BJ (cell line): ENCODE measurements at regions of chr2 and their contacts with region 1.

Region 1: GRCh38 chr2:238968616-238969384 is 120.9 kb downstream of the TWIST2 start:
- DNase-seq: no peak
- H3K4me3 ChIP-seq: no peak overlapping the region
- H3K27me3 ChIP-seq: no peaks in the 10 kb centered on the region
- CTCF ChIP-seq: no peak

Region 2: GRCh38 chr2:238954841-238955591 is 13.8 kb before region 1 on chr2:
- CTCF ChIA-PET with region 1: interaction called, 16 read pairs
- POLR2A ChIA-PET with region 1: no interaction called
- DNase-seq: no peak
- H3K4me3 ChIP-seq: no peak overlapping the region
- H3K27me3 ChIP-seq: no peaks in the 10 kb centered on the region
- CTCF ChIP-seq: no peak